Calu3 (cell line): ENCODE measurements at regions of chrX and their contacts with region 1.

Region 1: DNA sequence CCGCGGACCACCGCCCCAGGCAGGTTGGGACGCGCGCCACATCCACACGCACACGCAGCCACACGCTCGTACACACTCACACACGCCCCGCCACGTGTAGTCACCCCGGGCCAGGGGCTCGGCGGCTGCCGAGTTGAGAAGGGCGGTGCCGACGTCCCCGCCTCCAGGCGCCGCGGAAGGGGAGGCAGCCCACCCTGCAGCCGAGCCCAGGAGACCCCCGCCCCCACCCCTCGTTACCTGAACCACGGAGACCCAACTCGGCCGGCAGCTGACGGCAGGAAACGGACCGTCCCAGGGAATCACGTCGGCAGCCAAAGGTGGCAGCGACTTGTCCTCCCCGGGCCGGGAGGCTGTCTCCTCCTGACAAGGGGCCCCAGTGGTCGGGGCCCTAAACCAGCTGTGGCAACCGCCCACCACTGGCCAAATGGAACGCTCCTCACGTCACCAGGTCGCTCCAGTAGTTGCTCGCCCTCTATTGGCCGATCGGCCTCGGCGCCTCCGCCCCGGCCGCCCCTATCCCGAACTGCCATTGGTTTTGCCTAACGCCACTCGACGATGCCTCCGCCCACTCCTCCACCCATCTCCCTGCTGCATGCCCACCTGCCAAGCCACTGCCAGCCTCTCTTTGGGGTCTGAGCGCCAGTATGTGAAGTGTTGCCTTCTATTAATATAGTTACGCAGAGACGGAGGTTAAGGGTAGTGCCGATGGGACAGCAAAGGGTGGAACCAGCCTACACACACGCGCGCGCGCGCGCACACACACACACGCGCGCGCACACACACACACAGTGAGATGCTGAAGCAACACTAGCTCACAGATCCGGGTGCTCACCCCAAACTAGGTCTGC is at the start of gene ZDHHC9:
- DNase-seq: peak; percentile 91
- H3K4me3 Mint-ChIP-seq: peak within 1 kb of the TSS; percentile 86
- H3K27ac Mint-ChIP-seq: peak within 1 kb of the TSS; percentile 88
- H3K4me1 Mint-ChIP-seq: peaks cover 48% of the 10 kb centered on the region
- H3K27me3 Mint-ChIP-seq: no peaks in the 10 kb centered on the region
- CTCF ChIP-seq: no peak
- total RNA-seq, gene ZDHHC9: 60.8 and 66.6 TPM in 2 replicates

Region 2: DNA sequence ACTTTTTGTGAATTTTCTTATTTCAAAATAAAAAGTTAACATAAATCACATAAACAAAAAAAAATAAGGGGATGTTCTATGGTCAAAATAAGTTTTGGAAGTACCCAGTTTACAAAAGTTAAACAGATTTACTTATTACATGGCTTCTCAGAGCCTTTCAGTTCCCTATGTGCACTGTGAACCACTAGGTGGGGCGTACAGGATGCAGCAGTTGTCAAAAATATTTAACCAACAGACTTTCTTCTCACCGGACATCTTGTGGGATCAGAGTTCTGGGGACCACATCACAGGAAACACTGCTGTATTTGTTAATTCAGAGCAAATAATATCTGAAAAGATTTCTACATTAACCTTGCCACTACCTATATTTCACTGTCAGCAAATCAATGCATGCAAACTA is 394.5 kb before region 1 on chrX:
- CTCF ChIA-PET with region 1: no interaction called
- intact Hi-C with region 1: no loop called
- DNase-seq: no peak
- H3K4me3 Mint-ChIP-seq: no peak overlapping the region
- H3K27ac Mint-ChIP-seq: no peak overlapping the region
- H3K4me1 Mint-ChIP-seq: no peaks in the 10 kb centered on the region
- H3K27me3 Mint-ChIP-seq: no peaks in the 10 kb centered on the region
- CTCF ChIP-seq: no peak

Region 3: DNA sequence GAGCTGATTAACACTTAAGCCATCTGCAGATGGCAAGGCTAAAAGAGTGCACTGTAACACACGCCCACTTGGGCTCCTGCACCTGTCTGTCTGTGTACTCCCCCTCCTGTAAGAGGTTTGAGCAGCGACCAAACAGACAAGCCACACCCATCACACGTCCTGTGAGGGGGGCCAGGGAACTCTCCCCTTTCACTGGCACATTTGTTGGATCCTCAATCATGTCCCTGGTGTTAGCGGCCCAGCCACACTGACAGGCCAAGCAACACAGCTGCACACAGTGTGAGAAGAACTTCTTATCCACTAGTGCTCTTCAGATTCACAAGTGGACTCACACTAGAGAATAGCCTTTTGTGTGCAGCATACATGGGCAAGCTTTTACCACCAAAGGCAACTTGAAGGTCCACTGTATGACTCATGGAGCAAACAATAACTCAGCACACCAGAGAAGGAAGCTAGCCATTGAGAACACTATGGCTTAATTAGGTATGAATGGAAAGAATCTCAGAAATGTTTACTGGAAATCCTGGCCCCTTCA is 33.2 kb after region 1 on chrX:
- CTCF ChIA-PET with region 1: no interaction called
- intact Hi-C with region 1: loop called (anchors 2 kb)
- DNase-seq: peak; percentile 32
- H3K4me3 Mint-ChIP-seq: peak overlapping the region; percentile 35
- H3K27ac Mint-ChIP-seq: peak overlapping the region; percentile 49
- H3K4me1 Mint-ChIP-seq: peaks cover 17% of the 10 kb centered on the region
- H3K27me3 Mint-ChIP-seq: no peaks in the 10 kb centered on the region
- CTCF ChIP-seq: no peak